CD4-positive, alpha-beta memory T cell (primary cell): ENCODE measurements at regions of chr11 and their contacts with region 1.

Region 1: DNA sequence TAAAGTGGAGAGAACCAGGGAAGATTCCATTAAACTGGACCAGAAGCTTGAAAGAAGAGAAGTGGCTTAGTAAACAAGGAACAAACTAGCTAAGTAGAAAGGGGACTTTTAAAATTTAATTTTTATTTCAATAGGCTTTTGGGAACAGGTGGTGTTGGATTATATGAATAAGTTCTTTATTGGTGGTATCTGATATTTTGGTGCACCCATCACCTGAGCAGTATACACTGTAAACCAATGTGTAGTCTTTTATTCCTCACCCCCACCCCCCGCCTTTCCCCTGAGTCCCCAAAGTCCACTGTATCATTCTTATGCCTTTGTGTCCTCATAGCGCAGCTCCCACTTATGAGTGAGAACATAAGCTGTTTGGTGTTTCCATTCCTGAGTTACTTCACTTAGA is 7.4 kb downstream of the ACAT1 start:
- DNase-seq: no peak
- H3K4me3 ChIP-seq: no peak overlapping the region
- H3K4me3 Mint-ChIP-seq: no peak overlapping the region
- H3K27ac ChIP-seq: no peak overlapping the region
- H3K27ac Mint-ChIP-seq: peak overlapping the region in 3 of 7 donors; percentile 4 to 79 (median 58)
- H3K4me1 ChIP-seq: peaks cover 15% of the 10 kb centered on the region
- H3K4me1 Mint-ChIP-seq: peaks cover 26 to 35% (median 31%) of the 10 kb centered on the region in 4 donors
- H3K27me3 ChIP-seq: no peaks in the 10 kb centered on the region
- H3K27me3 Mint-ChIP-seq: no peaks in the 10 kb centered on the region

Region 2: DNA sequence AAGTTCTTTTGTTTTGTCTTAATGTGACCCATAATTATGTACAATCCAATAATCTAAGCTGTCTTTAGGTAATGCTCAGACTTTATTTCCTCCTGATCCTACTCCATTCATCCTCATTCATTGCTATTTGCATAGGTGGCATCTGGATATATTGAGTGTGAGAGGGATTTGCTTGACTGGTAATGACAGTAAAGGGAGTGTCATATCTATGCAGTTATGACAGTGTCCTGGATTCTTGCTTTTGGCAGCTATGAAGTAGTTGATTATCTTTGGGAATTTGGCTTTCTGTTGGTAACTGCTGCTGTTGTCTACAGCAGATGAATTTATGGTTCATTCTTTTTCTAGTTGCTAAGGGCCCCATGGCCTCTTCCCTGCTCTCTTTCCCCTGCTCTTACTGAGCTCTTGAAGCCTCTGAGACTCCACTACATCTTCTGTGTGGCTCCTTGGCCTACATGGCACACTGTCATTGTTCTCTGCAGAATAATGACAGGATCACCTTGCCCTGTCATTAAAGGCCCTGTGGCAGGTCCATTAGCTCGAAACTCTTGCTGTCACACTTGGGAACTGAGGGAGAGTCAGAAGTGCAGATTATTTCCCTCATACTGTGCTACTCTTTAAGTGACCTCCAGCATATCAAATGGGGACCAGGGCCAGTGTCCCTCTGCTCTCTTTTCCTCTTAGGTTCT is 27.5 kb before region 1 on chr11:
- CTCF ChIA-PET with region 1: no interaction called
- POLR2A ChIA-PET with region 1: no interaction called
- intact Hi-C with region 1: no loop called
- DNase-seq: no peak
- H3K4me3 ChIP-seq: no peak overlapping the region
- H3K4me3 Mint-ChIP-seq: no peak overlapping the region
- H3K27ac ChIP-seq: no peak overlapping the region
- H3K27ac Mint-ChIP-seq: peak overlapping the region in 3 of 7 donors; percentile 29 to 63 (median 47)
- H3K4me1 ChIP-seq: no peaks in the 10 kb centered on the region
- H3K4me1 Mint-ChIP-seq: no peaks in the 10 kb centered on the region
- H3K27me3 ChIP-seq: no peaks in the 10 kb centered on the region
- H3K27me3 Mint-ChIP-seq: no peaks in the 10 kb centered on the region

Region 3: GRCh38 chr11:108147150-108147549 is 18.4 kb after region 1 on chr11:
- CTCF ChIA-PET with region 1: interaction called, 10 read pairs
- POLR2A ChIA-PET with region 1: interaction called, 3 read pairs
- intact Hi-C with region 1: no loop called
- DNase-seq: no peak
- H3K4me3 ChIP-seq: no peak overlapping the region
- H3K4me3 Mint-ChIP-seq: no peak overlapping the region
- H3K27ac ChIP-seq: no peak overlapping the region
- H3K27ac Mint-ChIP-seq: no peak overlapping the region
- H3K4me1 ChIP-seq: no peaks in the 10 kb centered on the region
- H3K4me1 Mint-ChIP-seq: peaks cover 4 to 11% (median 10%) of the 10 kb centered on the region in 4 donors
- H3K27me3 ChIP-seq: no peaks in the 10 kb centered on the region
- H3K27me3 Mint-ChIP-seq: no peaks in the 10 kb centered on the region